Activated CD4-positive, alpha-beta memory T cell treated with anti-CD3 and anti-CD28 coated beads, Interleukin-2, amount 10 ng/mL, durations not matched to agents 7 days and 5 days (primary cell): ENCODE measurements at regions of chr4 and their contacts with region 1.

Region 1: DNA sequence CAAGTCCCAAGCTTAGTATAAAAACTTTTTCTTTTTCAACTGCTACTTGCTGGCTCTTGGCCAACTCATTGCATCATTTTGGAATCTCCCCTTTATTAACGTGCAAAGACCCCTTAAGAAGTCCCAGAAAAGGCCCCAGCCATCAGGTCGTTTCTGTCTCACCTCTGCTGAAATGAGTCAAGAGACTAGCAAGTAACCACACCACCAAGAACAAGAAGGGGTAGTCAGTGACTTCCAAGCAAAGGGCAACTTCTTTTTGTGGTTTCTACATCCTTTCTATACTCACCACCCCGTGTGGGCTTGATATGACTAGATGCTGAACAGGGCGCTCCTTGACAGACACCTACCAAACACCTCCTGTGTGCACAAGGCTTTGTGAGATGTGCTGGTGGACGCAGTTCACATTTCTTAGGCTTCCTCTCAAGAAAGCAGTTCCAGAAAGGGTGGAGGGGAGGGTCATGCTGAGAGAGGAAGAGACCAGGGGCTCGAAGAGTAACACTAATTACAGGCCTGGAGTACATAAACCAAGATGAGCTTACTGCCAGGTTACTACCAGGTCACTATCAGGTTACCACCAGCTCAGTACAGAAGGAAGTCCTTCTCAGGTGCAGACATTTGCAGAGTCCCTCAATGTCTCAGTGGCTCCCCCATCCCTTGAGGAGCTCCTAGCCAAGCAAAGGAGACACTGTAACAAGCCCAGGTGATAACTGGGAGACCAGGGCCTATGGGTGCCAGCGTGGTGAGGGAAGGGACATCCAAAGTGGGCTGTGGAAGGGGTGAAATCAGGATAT is 19.3 kb downstream of the JAKMIP1 start:
- DNase-seq: peak; percentile 84
- H3K4me3 Mint-ChIP-seq: peak overlapping the region; percentile 74
- H3K27ac Mint-ChIP-seq: peak overlapping the region; percentile 100
- H3K4me1 Mint-ChIP-seq: peaks cover 98% of the 10 kb centered on the region
- H3K27me3 Mint-ChIP-seq: no peaks in the 10 kb centered on the region

Region 2: DNA sequence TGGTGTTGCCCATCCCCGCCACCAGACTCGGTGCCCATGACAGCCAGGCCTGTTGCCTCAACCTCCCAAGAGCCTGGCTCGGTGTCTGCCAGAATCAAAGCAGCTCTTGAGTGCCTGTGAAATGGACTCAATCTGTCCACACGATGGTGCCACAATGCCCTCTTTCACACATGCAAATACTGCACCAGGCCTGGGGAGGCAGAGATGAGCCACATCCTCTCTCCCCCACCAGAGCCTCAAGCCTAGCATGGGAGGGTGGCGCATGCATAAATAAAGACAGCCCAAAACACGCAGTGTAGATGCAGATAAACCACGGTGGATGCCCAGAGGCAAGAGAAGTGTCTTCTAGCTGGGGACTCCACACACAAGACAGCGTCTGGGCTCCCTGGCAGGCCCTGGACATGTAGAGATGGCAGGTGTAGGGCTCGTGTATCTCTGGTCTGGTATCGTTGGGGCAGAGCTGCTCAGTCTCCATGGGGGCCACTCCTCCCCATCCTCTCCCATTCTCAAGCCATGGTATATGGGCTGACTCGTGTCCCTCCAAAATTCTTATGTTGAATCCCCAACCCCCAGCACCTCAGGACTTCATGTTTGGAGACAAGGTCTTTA is 46.3 kb before region 1 on chr4:
- CTCF ChIA-PET with region 1: interaction called, 18 read pairs
- POLR2A ChIA-PET with region 1: interaction called, 31 read pairs
- DNase-seq: peak; percentile 85
- H3K4me3 Mint-ChIP-seq: no peak overlapping the region
- H3K27ac Mint-ChIP-seq: peak overlapping the region; percentile 77
- H3K4me1 Mint-ChIP-seq: peaks cover 41% of the 10 kb centered on the region
- H3K27me3 Mint-ChIP-seq: no peaks in the 10 kb centered on the region

Region 3: DNA sequence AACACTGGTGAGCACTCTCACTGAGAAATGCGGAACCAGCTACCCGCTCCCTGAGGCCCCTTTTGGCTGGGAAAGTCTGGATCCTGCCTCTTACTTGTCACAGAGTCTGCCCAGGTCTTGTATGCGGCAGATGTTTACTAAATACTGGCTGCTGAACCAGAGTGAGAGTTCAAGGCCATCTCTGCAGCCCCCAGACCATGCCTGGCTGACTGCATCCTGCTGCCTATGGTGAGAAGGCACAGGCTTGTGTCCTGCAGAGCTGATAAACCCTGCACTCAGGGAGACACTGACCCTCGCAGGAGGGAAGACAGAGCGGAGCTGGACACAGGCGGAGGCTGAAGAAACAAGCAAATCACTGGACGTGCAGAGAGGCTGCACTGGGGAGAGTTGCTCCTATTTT is 27.2 kb before region 1 on chr4:
- CTCF ChIA-PET with region 1: interaction called, 13 read pairs
- POLR2A ChIA-PET with region 1: interaction called, 308 read pairs
- DNase-seq: no peak
- H3K4me3 Mint-ChIP-seq: no peak overlapping the region
- H3K27ac Mint-ChIP-seq: peak overlapping the region; percentile 74
- H3K4me1 Mint-ChIP-seq: peaks cover 78% of the 10 kb centered on the region
- H3K27me3 Mint-ChIP-seq: no peaks in the 10 kb centered on the region

Region 4: DNA sequence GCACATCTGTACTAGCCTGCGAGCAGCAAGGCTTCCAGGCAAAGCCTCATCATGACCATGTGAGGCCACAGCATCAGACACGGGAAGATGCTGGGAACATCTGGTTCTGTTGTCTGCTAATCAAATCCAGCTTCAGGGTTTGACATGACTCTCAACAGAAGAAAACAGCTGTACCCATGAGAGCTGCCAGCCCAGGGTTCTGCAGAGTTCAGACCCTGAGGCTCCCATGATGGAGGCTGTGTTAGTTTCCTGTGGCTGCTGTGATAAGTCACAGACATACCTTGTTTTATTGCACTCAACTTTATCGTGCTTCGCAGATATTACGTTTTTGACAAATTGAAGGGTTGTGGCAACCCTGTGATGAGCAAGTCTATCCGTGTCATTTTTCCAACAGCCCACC is 18.2 kb before region 1 on chr4:
- CTCF ChIA-PET with region 1: no interaction called
- POLR2A ChIA-PET with region 1: interaction called, 308 read pairs
- DNase-seq: no peak
- H3K4me3 Mint-ChIP-seq: no peak overlapping the region
- H3K27ac Mint-ChIP-seq: no peak overlapping the region
- H3K4me1 Mint-ChIP-seq: peaks cover 58% of the 10 kb centered on the region
- H3K27me3 Mint-ChIP-seq: no peaks in the 10 kb centered on the region

Region 5: GRCh38 chr4:6192245-6192644 is 11.2 kb after region 1 on chr4:
- CTCF ChIA-PET with region 1: interaction called, 7 read pairs
- POLR2A ChIA-PET with region 1: interaction called, 568 read pairs
- DNase-seq: no peak
- H3K4me3 Mint-ChIP-seq: no peak overlapping the region
- H3K27ac Mint-ChIP-seq: peak overlapping the region; percentile 4
- H3K4me1 Mint-ChIP-seq: peaks cover 80% of the 10 kb centered on the region
- H3K27me3 Mint-ChIP-seq: no peaks in the 10 kb centered on the region

Region 6: DNA sequence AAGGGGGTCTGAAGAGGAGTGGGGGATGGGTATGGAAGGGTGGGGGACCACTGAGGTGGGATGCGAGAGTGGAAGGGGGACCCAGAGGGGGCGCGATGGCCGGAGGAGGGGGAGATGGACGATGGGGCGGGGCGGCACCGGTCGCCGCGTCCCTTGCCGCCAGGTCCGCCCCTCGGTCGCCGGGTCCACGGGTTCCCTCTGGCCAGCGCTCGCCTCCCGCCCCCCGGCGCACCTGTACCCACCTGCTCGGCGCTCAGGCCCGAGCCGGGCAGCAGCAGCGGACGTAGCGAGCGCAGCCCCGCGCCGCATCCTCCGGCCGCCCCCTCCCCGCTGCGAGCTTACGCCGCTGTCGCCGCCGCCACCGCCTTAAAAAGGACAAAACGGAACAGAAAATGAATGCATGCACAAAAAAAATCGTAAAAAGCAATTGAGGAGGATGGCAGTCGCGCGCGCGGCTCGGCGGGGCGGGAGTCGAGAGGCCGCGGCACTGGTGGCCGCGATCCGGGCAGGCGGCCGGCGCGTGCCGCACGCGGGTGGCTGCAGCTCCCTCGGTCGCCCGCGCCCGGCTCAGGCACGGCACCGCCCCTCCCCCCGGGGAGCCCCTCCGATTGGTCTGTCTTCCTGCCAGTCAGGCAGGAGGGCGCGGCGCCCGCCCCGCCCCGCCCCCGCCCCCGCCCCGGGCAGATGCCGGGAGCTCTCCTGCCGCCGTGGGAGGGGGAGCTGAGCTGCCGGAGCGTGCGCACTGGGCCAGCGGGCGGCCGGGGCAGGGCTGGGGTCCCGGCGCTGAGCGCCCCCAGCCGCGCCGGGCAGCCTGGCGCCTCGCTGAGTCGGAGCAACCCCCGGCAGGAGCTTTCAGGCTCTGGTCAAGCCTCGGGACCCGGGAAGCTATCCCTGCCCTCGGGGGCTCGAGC is 19.2 kb after region 1 on chr4 and contains the start of gene JAKMIP1:
- CTCF ChIA-PET with region 1: interaction called, 62 read pairs
- POLR2A ChIA-PET with region 1: interaction called, 568 read pairs
- DNase-seq: peak; percentile 93
- H3K4me3 Mint-ChIP-seq: peak within 1 kb of the TSS; percentile 92
- H3K27ac Mint-ChIP-seq: peak within 1 kb of the TSS; percentile 95
- H3K4me1 Mint-ChIP-seq: peaks cover 50% of the 10 kb centered on the region
- H3K27me3 Mint-ChIP-seq: no peaks in the 10 kb centered on the region
- total RNA-seq, gene JAKMIP1: 43.8 to 44.4 TPM